Calu3 (cell line): ENCODE measurements at regions of chr7 and their contacts with region 1.

Region 1: DNA sequence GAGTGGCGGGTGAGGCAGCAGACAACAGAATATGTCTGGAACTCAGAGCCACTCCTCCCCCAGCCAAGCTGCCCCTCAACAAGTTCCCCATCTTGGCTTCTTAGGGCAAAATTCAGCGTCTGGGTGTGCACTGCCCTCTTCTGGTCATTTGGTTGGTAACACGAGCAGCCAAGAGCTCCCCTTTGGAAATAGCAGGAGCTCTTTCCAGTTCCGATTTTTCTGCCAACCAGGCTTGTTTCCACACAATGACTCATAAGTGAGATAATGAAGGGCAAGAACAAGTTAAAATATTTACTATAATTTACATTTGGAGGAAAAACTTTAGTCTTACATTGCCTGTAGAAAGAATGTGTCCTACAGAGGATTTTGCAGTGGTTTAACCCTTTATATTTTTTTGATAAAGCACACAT is 70.5 kb downstream of the ADCYAP1R1 start:
- DNase-seq: peak; percentile 82
- H3K4me3 Mint-ChIP-seq: no peak overlapping the region
- H3K27ac Mint-ChIP-seq: no peak overlapping the region
- H3K4me1 Mint-ChIP-seq: peaks cover 7% of the 10 kb centered on the region
- H3K27me3 Mint-ChIP-seq: peaks cover 78% of the 10 kb centered on the region
- CTCF ChIP-seq: peak; percentile 85

Region 2: DNA sequence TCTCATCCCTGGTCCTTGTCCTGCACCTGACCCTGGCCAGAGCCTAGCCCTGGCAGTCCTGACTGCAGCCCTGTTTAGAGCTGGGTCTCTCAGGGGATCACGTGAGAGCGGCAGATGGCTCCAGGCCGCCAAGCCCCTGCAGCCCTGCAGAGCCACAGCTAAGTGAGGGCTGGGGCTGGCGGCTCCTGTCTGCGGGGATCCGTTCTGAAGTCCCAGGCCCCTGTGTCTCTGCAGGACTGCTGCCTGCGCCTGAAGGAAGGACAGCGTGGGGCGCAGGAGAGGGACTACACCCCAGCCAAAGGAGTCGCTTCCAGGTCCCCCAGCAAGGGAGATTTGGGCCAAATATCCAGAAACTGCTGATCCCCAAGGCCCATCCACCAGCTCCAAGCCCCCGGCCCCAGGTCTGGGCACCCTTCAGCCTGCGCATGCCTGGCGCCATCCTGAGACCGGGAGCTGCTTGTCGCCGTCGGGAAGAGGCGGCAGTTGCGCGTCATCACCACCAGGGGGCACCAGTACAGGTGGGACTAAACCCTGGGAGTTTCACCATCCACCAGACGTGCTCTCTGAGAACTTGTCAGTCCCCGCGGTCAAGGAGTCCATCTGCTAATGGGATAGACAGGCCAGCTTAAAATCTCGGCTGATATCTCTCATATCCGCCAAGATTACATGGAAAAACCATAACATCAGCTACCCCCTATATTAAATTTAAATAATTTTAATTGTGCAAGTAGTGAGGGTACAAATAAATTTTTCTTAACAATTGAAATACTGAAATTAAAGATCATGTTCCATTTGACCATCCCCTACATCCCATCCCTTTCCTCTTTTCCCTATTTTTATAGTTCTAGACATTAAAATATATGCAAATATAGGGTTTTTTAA is 184.0 kb before region 1 on chr7:
- CTCF ChIA-PET with region 1: interaction called, 11 read pairs
- intact Hi-C with region 1: no loop called
- DNase-seq: peak; percentile 99
- H3K4me3 Mint-ChIP-seq: no peak overlapping the region
- H3K27ac Mint-ChIP-seq: no peak overlapping the region
- H3K4me1 Mint-ChIP-seq: peaks cover 72% of the 10 kb centered on the region
- H3K27me3 Mint-ChIP-seq: no peaks in the 10 kb centered on the region
- CTCF ChIP-seq: peak; percentile 99

Region 3: DNA sequence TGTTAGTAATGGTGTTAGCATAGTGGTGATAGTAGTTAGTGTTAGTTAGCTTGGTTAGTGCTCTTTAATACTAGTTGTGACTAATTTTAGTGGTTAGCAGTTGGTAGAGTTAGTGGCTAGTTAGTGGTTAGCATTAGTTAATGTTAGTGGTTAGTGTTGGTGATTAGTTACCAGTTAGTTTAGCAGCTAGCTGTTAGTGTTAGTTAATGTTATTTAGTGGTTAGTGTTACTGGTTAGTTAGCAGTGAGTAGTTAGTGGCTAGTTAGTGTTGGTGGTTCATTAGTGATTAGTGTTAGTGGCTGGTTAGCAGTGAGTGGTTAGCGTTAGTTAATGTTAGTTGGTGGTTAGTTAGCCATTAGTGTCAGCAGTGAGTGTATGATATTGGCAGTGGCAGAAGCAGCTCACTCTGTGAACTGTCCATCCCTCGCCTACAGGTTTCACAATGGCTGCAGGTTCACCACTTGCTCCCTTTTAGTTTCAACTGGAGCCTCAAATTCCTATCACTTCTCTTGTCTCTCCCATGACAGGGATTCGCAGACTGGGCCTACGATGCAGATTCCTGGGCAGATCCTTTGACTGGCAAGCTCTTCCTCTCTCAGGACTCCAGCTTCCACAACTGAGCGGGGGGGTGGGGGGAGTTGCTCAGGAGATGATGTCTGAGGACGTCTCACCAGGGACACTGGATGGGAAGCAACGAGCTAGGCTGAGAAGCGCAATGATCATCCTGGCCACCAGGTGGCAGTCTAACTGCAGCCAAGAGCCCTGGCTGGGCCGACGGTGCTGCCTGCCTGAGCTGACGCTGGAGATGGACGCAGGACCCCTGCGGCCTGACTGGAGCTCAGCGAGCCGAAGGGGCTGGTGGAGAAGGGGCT is 139.4 kb before region 1 on chr7:
- CTCF ChIA-PET with region 1: interaction called, 397 read pairs
- intact Hi-C with region 1: loop called (anchors 1 kb)
- DNase-seq: peak; percentile 96
- H3K4me3 Mint-ChIP-seq: peak overlapping the region; percentile 13
- H3K27ac Mint-ChIP-seq: no peak overlapping the region
- H3K4me1 Mint-ChIP-seq: peaks cover 30% of the 10 kb centered on the region
- H3K27me3 Mint-ChIP-seq: peaks cover 51% of the 10 kb centered on the region
- CTCF ChIP-seq: peak; percentile 97

Region 4: DNA sequence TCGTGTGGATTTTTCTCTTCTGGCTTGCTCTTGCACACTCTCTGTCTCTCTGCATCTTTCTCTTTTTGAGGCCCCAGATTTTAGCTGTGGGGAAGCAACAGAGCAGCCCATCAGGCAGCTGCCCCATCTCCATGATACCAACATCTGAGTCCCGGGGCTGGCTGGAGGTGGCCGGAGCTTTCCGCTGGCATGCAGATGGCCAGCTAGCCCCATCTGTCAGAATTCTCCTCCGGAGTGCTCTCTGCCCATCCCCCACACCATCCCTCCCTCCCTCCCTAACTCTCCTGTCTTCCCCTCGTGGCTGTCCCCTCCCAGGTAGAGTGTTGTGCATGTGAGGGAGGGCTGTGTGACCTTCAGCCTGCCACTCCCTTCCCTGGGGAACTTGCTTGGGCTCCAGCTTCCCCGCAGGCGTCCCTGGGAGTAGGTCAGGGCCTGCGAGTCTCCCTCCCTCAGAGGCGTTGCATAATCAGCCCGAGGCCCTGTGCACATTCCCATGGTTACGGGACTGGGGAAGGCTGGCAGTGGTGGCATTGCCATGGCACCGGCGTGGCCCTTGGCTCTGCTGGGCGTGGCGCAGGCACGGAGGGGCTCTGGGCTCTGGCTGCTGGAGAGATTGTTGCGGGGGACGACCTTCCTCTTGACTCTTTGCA is 134.2 kb before region 1 on chr7:
- CTCF ChIA-PET with region 1: interaction called, 397 read pairs
- intact Hi-C with region 1: loop called (anchors 1 kb)
- DNase-seq: peak; percentile 86
- H3K4me3 Mint-ChIP-seq: peak overlapping the region; percentile 18
- H3K27ac Mint-ChIP-seq: no peak overlapping the region
- H3K4me1 Mint-ChIP-seq: peaks cover 45% of the 10 kb centered on the region
- H3K27me3 Mint-ChIP-seq: peaks cover 36% of the 10 kb centered on the region
- CTCF ChIP-seq: no peak

Region 5: GRCh38 chr7:31074403-31075085 is 48.1 kb before region 1 on chr7:
- CTCF ChIA-PET with region 1: no interaction called
- intact Hi-C with region 1: no loop called
- DNase-seq: no peak
- H3K4me3 Mint-ChIP-seq: no peak overlapping the region
- H3K27ac Mint-ChIP-seq: no peak overlapping the region
- H3K4me1 Mint-ChIP-seq: no peaks in the 10 kb centered on the region
- H3K27me3 Mint-ChIP-seq: no peaks in the 10 kb centered on the region
- CTCF ChIP-seq: no peak

Region 6: GRCh38 chr7:31302356-31302755 is 179.7 kb after region 1 on chr7:
- CTCF ChIA-PET with region 1: no interaction called
- intact Hi-C with region 1: no loop called
- DNase-seq: no peak
- H3K4me3 Mint-ChIP-seq: no peak overlapping the region
- H3K27ac Mint-ChIP-seq: no peak overlapping the region
- H3K4me1 Mint-ChIP-seq: no peaks in the 10 kb centered on the region
- H3K27me3 Mint-ChIP-seq: peaks cover 67% of the 10 kb centered on the region
- CTCF ChIP-seq: no peak